ENCODE measurements at regions of chr22 and their contacts with region 1.

Region 1: GRCh38 chr22:41334215-41334614 is 32.9 kb downstream of the ZC3H7B start:
- DNase-seq: no peak
- H3K4me3 ChIP-seq: no peak overlapping the region
- H3K27ac ChIP-seq: no peak overlapping the region
- H3K4me1 ChIP-seq: peaks cover 0 to 8% (median 0%) of the 10 kb centered on the region in 4 experiments; a peak in 2 of 7 replicates
- H3K27me3 ChIP-seq: no peaks in the 10 kb centered on the region
- CTCF ChIP-seq: no peak
- EP300 ChIP-seq: no peak
- POLR2A ChIP-seq: no peak
- RAD21 ChIP-seq: no peak

Region 2: DNA sequence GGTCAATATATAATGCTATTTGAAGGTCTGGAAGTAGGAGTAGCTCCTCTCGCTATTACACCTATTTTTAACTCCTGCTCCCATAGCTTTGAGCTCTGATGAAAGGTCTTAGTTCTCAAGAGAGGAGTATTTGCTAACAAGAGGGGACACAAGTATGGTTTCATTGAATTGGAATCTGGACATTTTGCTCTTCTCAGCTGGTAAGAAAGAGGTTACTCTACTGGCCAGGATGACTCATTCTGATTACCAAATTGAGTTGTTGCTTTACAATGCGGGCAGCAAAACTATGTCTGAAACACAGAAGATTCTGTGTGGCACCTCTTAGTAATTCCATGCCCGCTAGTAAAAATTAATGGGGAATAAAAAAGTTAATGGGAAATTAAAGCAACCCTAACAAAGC is 305.4 kb before region 1 on chr22:
- CTCF ChIA-PET with region 1: no interaction called
- POLR2A ChIA-PET with region 1: no interaction called
- DNase-seq: no peak
- H3K4me3 ChIP-seq: no peak overlapping the region
- H3K27ac ChIP-seq: no peak overlapping the region
- H3K4me1 ChIP-seq: peaks cover 0 to 6% (median 0%) of the 10 kb centered on the region in 4 experiments; a peak in 2 of 7 replicates
- H3K27me3 ChIP-seq: no peaks in the 10 kb centered on the region; a peak in 1 of 7 replicates
- CTCF ChIP-seq: no peak
- EP300 ChIP-seq: no peak
- POLR2A ChIP-seq: no peak
- RAD21 ChIP-seq: no peak

Region 3: GRCh38 chr22:41347066-41347859 is 13.0 kb after region 1 on chr22:
- CTCF ChIA-PET with region 1: interaction called, 3 read pairs
- POLR2A ChIA-PET with region 1: interaction called, 16 read pairs
- DNase-seq: no peak
- H3K4me3 ChIP-seq: no peak overlapping the region
- H3K27ac ChIP-seq: no peak overlapping the region
- H3K4me1 ChIP-seq: no peaks in the 10 kb centered on the region
- H3K27me3 ChIP-seq: no peaks in the 10 kb centered on the region; a peak in 1 of 7 replicates
- CTCF ChIP-seq: no peak
- EP300 ChIP-seq: no peak
- POLR2A ChIP-seq: no peak
- RAD21 ChIP-seq: no peak

Region 4: GRCh38 chr22:41458161-41458728 is 124.0 kb after region 1 on chr22:
- CTCF ChIA-PET with region 1: no interaction called
- POLR2A ChIA-PET with region 1: no interaction called
- DNase-seq: no peak
- H3K4me3 ChIP-seq: no peak overlapping the region
- H3K27ac ChIP-seq: no peak overlapping the region
- H3K4me1 ChIP-seq: no peaks in the 10 kb centered on the region
- H3K27me3 ChIP-seq: no peaks in the 10 kb centered on the region
- CTCF ChIP-seq: no peak
- EP300 ChIP-seq: no peak
- POLR2A ChIP-seq: no peak
- RAD21 ChIP-seq: no peak

Measured in H1 (cell line).